Endothelial cell of umbilical vein (primary cell): ENCODE measurements at regions of chr18 and their contacts with region 1.

Region 1: GRCh38 chr18:58117786-58118403 is 73.9 kb downstream of the NEDD4L start:
- DNase-seq: peak; percentile 96
- H3K4me3 ChIP-seq: no peak overlapping the region
- H3K27ac ChIP-seq: peak overlapping the region; percentile 48
- H3K4me1 ChIP-seq: peaks cover 9% of the 10 kb centered on the region
- H3K27me3 ChIP-seq: no peaks in the 10 kb centered on the region
- CTCF ChIP-seq: no peak
- POLR2A ChIP-seq: no peak

Region 2: GRCh38 chr18:57561728-57562423 is 556.0 kb before region 1 on chr18:
- CTCF ChIA-PET with region 1: interaction called, 15 read pairs
- POLR2A ChIA-PET with region 1: no interaction called
- dilution Hi-C with region 1: no loop called
- intact Hi-C with region 1: loop called (anchors 1 kb)
- DNase-seq: peak; percentile 49
- H3K4me3 ChIP-seq: no peak overlapping the region
- H3K27ac ChIP-seq: no peak overlapping the region
- H3K4me1 ChIP-seq: no peaks in the 10 kb centered on the region
- H3K27me3 ChIP-seq: no peaks in the 10 kb centered on the region
- CTCF ChIP-seq: peak; percentile 59 to 75
- POLR2A ChIP-seq: no peak

Region 3: DNA sequence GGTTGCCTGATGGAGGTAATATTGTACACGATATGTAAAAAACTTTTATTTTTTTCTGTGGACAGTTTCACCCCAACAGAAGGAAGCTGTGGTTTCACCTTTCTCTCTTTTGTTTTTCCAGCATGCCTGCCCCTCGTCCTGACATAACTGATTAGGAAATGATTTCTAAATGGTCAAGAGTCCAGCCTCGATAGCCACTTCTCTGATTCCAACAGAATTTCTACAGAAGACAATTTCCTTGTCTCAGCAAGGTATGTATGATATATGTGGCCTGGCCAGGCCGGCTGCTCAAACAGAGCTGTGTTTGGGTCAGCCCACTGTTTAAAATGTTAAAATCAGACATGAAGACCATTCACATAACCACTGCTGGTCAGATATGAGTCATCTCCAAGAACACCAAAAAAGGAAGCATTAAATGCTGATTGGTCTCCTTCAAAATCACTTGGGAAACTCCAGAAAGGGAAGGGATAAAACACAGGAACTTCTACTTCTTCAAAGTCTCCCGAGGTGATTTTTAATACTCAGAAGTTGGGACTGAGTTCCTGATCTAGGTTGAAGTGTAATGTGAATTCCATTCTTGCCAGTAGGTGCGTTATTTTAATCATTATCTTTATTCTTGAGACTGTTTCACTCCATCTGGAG is 337.1 kb before region 1 on chr18:
- CTCF ChIA-PET with region 1: interaction called, 10 read pairs
- POLR2A ChIA-PET with region 1: no interaction called
- dilution Hi-C with region 1: no loop called
- intact Hi-C with region 1: no loop called
- DNase-seq: peak; percentile 94
- H3K4me3 ChIP-seq: peak overlapping the region in 1 of 3 experiments; percentile 41
- H3K27ac ChIP-seq: peak overlapping the region; percentile 98
- H3K4me1 ChIP-seq: peaks cover 88% of the 10 kb centered on the region
- H3K27me3 ChIP-seq: no peaks in the 10 kb centered on the region
- CTCF ChIP-seq: no peak
- POLR2A ChIP-seq: peak; percentile 69

Region 4: GRCh38 chr18:57959278-57959677 is 158.6 kb before region 1 on chr18:
- CTCF ChIA-PET with region 1: interaction called, 70 read pairs
- POLR2A ChIA-PET with region 1: no interaction called
- dilution Hi-C with region 1: no loop called
- intact Hi-C with region 1: loop called (anchors 1 kb)
- DNase-seq: peak; percentile 59
- H3K4me3 ChIP-seq: no peak overlapping the region
- H3K27ac ChIP-seq: no peak overlapping the region
- H3K4me1 ChIP-seq: peaks cover 3% of the 10 kb centered on the region
- H3K27me3 ChIP-seq: peaks cover 4 to 14% of the 10 kb centered on the region in 2 experiments
- CTCF ChIP-seq: peak; percentile 22 to 44
- POLR2A ChIP-seq: no peak

Region 5: DNA sequence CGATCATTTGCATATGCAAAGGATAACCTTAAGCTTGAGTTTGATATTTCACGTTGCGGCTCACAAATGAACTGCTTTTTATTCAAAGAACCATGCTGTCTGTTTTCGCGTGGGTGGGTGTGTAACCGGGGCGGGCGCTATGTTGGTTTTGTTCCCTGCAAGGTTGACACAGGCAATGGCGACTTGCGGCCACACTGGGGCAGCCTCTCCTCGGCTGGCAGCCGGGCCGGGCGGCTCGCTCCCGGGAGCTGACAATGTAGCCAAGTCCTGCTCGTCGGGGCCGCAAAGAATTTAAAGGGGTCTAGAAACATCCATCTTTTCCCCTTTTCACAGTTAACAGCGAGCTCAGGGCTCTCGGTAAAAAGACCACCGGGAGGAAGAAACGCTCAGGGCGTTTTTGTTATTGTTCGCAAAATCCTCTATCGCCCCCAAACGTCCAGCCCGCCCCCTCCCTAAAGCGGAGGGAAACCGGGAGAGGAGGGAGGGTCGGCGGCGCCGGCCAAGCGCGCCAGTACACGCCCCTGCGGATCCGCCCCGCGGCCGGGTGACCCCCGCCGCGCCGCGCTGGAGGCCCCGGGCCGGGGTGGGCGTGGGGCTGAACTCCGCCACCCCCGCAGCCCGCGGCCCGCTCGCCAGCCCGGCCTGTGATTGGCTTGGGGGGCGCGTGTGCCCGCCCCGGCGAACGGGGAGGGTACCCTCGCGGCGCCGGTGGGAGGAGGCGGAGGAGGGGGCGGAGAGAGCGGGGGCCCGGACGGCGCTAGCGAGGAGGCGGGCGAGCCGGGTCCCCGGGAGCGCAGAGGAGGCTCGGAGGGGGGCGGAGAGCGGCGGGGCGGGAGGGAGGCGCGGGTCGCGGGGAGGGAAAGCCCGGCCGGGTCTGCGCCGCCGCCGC is 74.2 kb before region 1 on chr18 and contains the start of gene NEDD4L:
- CTCF ChIA-PET with region 1: interaction called, 144 read pairs
- POLR2A ChIA-PET with region 1: no interaction called
- dilution Hi-C with region 1: no loop called
- intact Hi-C with region 1: loop called (anchors 1 kb)
- DNase-seq: peak; percentile 87
- H3K4me3 ChIP-seq: peak within 1 kb of the TSS; percentile 75 to 93 (median 77)
- H3K27ac ChIP-seq: peak within 1 kb of the TSS; percentile 72
- H3K4me1 ChIP-seq: peaks cover 16% of the 10 kb centered on the region
- H3K27me3 ChIP-seq: no peaks in the 10 kb centered on the region
- CTCF ChIP-seq: peak; percentile 79 to 91
- POLR2A ChIP-seq: no peak
- total RNA-seq, gene NEDD4L: 78.9 and 95.9 TPM in 2 replicates

Region 6: GRCh38 chr18:58105888-58106260 is 12.0 kb before region 1 on chr18:
- CTCF ChIA-PET with region 1: interaction called, 14 read pairs
- POLR2A ChIA-PET with region 1: no interaction called
- dilution Hi-C with region 1: no loop called
- intact Hi-C with region 1: no loop called
- DNase-seq: no peak
- H3K4me3 ChIP-seq: no peak overlapping the region
- H3K27ac ChIP-seq: no peak overlapping the region
- H3K4me1 ChIP-seq: no peaks in the 10 kb centered on the region
- H3K27me3 ChIP-seq: no peaks in the 10 kb centered on the region
- CTCF ChIP-seq: no peak
- POLR2A ChIP-seq: no peak

Region 7: DNA sequence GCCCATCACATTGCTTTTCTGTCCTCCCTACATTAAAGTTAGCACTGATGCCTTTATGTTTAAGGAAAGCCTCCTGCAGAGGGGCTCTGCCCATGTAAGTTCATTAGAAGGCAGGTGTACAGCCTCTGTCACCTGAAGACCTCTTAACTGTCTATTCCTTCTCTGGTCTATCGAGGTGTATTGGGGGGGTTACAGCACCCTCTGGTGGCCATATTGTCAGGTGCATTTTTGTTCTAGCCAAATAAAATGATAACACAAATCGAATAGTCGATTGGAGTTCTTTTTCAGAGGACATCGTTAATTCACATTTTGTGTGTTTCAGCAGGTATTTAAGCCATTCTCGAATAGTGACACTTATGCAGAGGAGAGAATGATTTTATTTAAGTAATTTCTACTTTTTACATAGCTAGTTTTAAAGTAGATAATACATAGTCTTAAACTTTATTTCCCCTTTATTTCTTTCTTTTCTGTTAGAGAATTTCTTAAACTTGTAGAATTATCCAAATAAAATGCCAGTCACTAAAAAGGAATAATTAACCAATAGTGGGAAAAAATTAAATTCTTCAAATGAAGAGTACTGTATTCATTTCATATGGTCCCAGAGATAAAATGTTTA is 63.0 kb after region 1 on chr18:
- CTCF ChIA-PET with region 1: interaction called, 12 read pairs
- POLR2A ChIA-PET with region 1: no interaction called
- dilution Hi-C with region 1: no loop called
- intact Hi-C with region 1: no loop called
- DNase-seq: peak; percentile 67
- H3K4me3 ChIP-seq: no peak overlapping the region
- H3K27ac ChIP-seq: no peak overlapping the region
- H3K4me1 ChIP-seq: peaks cover 24% of the 10 kb centered on the region
- H3K27me3 ChIP-seq: no peaks in the 10 kb centered on the region
- CTCF ChIP-seq: peak; percentile 75 to 77
- POLR2A ChIP-seq: no peak